Right lobe of liver (tissue), 6 donors: ENCODE measurements at regions of chr11 and their contacts with region 1.

Region 1: DNA sequence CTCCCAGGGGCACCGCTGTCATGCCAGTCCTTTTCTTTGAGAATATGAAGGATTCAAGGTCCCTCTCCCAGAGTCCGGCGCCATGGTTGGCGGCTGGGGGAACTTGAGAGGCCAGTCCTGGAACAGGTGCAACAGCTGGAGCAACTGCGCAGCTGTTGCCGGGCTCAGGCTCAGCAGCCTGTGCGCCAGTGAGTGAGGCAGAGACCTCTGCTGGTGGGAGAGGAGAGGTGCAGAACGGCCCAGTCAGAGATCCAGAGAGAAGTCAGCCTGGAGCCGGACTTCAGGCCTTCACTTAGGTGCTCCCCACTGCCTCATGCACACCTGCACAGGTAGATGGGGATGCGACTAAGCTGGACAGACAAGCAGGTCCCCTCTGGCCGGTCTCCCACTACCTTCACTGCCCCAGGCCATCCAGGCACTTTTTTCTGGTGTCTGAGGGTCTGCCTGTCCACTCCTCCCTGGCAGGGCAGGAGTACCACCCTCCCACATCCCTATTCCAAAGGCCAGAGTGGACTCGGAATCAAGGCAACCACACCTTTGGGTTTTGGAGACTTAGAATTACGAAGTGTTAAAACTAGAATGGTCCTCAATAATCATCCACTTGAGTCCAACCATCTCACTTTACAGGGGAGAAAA is 4.6 kb downstream of the CHRDL2 start:
- DNase-seq: peak; percentile 73 to 80 (median 75)
- ATAC-seq: peak; percentile 95 to 98 (median 96)
- H3K4me3 ChIP-seq: no peak overlapping the region
- H3K27ac ChIP-seq: no peak overlapping the region
- H3K4me1 ChIP-seq: peaks cover 0 to 4% (median 0%) of the 10 kb centered on the region in 4 donors
- H3K27me3 ChIP-seq: no peaks in the 10 kb centered on the region
- CTCF ChIP-seq: peak; percentile 92 to 96 (median 95)
- POLR2A ChIP-seq: no peak

Region 2: DNA sequence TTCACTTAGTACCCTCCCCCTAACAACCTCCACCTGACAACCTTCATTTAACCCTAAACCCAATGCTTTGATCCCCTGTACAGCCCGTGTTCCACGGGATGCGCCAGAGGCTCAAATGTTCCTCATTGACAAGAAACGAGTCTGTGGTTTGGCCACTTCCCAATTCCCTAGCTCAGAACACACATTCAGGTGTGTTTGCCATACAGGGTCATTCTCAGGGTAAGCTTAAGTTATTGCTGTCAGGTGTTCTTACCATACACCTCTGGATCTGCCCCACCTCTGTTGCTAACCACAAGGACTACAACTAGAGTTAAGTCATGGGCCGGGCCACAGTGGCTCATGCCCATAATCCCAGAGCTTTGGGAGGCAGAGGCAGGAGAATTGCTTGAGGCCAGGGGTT is 179.9 kb before region 1 on chr11:
- intact Hi-C with region 1: no loop called
- DNase-seq: no peak
- ATAC-seq: no peak
- H3K4me3 ChIP-seq: no peak overlapping the region
- H3K27ac ChIP-seq: no peak overlapping the region
- H3K4me1 ChIP-seq: peaks cover 0 to 7% (median 0%) of the 10 kb centered on the region in 4 donors
- H3K27me3 ChIP-seq: no peaks in the 10 kb centered on the region
- CTCF ChIP-seq: no peak
- POLR2A ChIP-seq: no peak

Region 3: DNA sequence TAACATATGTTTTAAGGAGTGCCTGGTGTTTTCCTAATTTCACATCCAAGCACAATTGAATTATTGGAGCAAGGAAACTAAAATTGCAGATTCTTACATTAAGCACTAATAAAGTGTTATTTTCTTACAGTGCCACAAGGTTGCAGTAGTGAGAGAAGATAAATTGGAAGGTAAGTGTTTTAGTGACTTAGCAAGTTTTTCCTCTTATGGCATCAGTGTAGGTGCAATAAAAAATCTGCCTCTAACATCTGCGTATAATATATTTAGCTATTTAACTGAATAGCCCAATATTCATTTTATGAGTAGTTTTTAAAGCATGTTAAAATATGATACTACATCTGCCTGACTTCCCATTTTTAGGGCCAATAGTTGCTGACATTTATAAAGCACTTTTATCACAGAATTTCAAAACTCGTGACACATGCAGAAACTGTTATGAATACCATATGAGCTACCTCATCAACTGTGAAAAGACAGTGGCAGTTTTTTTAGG is 115.2 kb before region 1 on chr11:
- intact Hi-C with region 1: no loop called
- DNase-seq: no peak
- ATAC-seq: peak; percentile 49 to 61 (median 53)
- H3K4me3 ChIP-seq: no peak overlapping the region
- H3K27ac ChIP-seq: no peak overlapping the region
- H3K4me1 ChIP-seq: peaks cover 0 to 35% (median 15%) of the 10 kb centered on the region in 4 donors
- H3K27me3 ChIP-seq: no peaks in the 10 kb centered on the region
- CTCF ChIP-seq: peak; percentile 47 to 57 (median 50)
- POLR2A ChIP-seq: no peak

Region 4: GRCh38 chr11:74634537-74634936 is 92.1 kb before region 1 on chr11:
- intact Hi-C with region 1: loop called (anchors 10 kb)
- DNase-seq: no peak
- ATAC-seq: peak; percentile 85 to 96 (median 89)
- H3K4me3 ChIP-seq: no peak overlapping the region
- H3K27ac ChIP-seq: no peak overlapping the region
- H3K4me1 ChIP-seq: no peaks in the 10 kb centered on the region
- H3K27me3 ChIP-seq: no peaks in the 10 kb centered on the region
- CTCF ChIP-seq: peak; percentile 45 to 69 (median 56)
- POLR2A ChIP-seq: no peak

Region 5: DNA sequence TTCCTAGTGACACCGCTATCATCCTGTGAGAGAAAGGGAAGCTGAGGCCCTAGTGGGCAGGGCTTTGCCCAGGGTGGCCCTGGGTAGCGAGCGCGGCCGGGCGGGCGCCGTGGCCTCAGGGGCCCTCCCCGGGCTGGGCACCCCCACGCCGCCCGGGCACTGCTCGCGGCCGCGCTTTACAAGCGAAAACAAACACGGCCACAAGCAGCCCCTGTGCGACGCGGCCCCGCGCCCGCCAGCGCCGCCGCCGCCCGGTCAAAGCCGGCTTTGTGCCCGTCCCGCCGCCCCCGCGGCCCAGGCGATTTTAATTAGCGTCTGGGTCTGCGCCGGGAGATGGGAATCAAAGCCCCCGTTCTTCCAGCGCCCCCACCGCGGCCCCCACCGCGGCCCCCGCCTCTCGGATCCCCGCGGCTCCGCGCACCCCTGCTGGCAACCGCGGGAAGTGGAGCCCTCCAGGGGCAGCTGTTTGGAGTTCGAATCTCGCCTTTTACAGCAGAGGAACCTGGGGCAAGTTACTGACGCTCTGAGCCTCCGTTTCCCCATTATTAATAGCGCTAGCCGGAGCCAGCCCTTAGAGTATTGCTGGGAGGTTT is 43.3 kb before region 1 on chr11:
- intact Hi-C with region 1: no loop called
- DNase-seq: no peak
- ATAC-seq: peak; percentile 28 to 66 (median 34)
- H3K4me3 ChIP-seq: peak overlapping the region; percentile 35 to 54 (median 52)
- H3K27ac ChIP-seq: peak overlapping the region in 1 of 3 donors; percentile 1
- H3K4me1 ChIP-seq: peaks cover 0 to 12% (median 3%) of the 10 kb centered on the region in 4 donors
- H3K27me3 ChIP-seq: no peaks in the 10 kb centered on the region
- CTCF ChIP-seq: peak; percentile 32 to 47 (median 38)
- POLR2A ChIP-seq: no peak